Activated naive CD4-positive, alpha-beta T cell treated with anti-CD3 and anti-CD28 coated beads for 36 hours (primary cell): ENCODE measurements at regions of chr2 and their contacts with region 1.

Region 1: DNA sequence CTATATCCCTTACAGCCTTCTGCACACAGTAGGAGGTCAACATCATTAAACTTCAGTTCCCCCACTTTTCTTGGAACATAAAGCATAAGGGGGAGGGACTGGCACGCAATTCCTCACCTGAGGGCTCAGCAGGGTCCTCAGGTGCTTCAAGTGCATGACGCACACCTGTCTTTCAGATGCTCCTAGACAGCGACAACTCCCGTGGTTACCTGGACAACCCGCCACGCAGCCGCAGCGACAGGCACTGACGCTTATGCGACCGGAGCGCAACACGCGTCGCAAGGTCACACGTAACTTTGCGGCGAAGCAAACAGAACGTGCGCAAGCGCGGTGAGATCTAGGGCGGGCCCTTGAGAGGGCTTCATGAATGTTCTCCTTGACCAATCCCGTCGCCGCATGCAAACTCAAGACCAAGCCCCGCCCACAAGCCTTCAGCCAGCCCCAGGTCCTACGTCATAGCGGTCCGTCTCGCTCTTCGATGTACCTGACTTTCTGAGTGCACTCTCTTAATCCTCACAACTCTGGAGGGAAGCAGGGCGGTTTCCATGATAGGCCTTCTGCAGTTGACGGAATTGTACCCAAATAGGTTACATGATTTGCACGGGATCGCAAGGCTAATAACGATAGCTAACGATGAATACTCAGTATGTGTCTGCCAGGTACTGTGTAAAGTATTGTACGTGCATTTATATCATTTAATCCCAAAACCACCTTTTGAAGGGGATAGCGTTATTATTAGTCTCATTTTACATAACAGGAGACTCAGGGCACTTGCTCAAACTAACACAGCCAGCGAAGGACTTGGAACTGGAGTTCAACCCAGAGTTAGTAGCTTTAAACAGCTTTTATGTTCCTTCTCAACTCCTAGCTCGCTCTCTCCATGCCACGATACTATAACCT is at the start of gene IFT172:
- DNase-seq: peak; percentile 100
- H3K4me3 Mint-ChIP-seq: peak within 1 kb of the TSS; percentile 87
- H3K27ac Mint-ChIP-seq: peak within 1 kb of the TSS; percentile 66
- H3K4me1 Mint-ChIP-seq: peaks cover 20% of the 10 kb centered on the region
- H3K27me3 Mint-ChIP-seq: peaks cover 10% of the 10 kb centered on the region
- total RNA-seq, gene IFT172: 9.2 to 12.7 TPM

Region 2: DNA sequence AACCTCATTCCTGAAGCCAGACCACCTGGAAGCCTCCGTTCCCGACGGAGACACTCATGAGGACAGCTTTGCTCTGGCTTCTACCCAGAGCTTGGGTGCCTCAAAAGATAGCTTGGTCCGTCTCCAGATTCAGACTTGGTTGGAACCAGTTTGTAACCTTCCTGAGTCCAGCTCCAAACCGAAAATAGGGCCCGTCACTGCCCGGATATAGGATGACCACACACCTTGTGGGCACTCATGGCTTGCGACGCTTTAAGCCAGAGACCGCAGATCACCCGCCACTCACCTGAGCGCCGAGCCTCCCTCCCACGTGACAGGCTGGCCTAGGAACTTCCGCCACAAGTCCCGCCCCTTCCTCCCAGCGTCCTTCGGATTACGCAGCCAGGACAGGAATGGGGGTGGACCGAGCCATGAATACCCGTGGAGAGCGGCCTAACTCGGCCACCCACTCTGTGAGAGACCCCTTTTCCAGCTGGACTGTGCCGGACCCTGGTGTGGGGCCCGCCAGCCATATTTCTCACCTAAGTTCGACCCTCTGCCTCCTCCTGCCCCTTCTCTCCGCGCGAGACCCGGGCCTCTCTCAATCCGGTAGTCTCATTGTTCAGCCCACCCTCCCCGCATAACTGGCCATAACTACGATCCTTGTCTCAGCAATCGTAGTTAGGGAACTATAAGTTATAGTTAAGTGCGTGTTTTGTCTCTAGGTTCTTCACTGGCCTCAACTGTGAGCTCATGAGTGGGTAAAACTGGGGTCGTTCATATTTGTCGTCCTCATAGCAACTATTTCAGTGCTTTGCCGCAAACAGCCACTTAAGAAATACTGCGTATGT is 166.8 kb before region 1 on chr2 and contains the start of gene MPV17:
- CTCF ChIA-PET with region 1: no interaction called
- intact Hi-C with region 1: loop called (anchors 1 kb)
- DNase-seq: peak; percentile 95
- H3K4me3 Mint-ChIP-seq: peak within 1 kb of the TSS; percentile 84
- H3K27ac Mint-ChIP-seq: peak within 1 kb of the TSS; percentile 85
- H3K4me1 Mint-ChIP-seq: peaks cover 14% of the 10 kb centered on the region
- H3K27me3 Mint-ChIP-seq: no peaks in the 10 kb centered on the region
- total RNA-seq, gene MPV17: 80.2 to 82.3 TPM

Region 3: DNA sequence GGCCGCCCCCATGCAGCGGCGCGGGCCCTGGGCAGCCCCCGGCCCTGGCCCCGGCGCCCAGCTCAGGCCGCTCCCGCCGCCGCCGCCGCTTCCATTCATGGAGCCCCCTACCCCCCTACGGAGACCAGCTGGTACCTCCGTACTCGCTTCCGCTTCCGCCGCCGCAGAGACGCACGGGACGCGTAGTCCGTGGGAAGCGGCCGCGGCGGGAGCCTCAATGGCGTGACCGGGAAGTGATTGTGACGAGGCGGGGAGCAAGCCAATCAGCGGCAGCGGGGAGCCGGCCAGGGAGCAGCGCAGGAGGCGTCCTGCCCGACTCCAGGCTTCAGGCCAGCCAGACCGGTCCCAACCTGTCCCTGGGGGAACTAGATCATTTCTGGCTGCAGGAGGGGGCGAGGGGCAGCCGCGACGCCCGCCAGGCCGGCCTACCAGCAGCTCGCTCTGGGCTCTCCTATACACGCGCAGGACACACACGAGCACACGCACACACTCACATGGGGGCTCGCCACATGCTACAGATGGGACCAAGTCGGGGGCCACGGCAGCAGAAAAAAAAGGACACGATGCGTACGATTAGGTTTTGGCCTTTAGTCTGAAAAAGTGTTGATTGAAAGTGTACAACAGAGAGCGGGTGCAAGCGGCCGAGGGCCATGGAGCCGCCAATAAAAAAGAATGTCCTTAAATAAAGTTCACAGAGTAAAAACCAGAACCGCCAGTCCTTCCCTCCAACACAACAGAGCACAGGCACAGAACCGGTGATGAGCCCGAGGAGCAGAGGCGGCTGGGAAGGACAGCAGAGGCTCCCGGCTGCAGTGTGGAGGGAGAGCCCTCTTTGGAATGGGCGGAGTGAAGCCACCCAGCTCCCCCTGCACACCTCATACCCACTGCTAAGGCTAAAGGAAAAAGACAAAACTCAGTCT is 108.9 kb before region 1 on chr2 and contains the start of gene ZNF513:
- CTCF ChIA-PET with region 1: no interaction called
- intact Hi-C with region 1: loop called (anchors 1 kb)
- DNase-seq: peak; percentile 93
- H3K4me3 Mint-ChIP-seq: peak within 1 kb of the TSS; percentile 79
- H3K27ac Mint-ChIP-seq: peak within 1 kb of the TSS; percentile 86
- H3K4me1 Mint-ChIP-seq: peaks cover 30% of the 10 kb centered on the region
- H3K27me3 Mint-ChIP-seq: no peaks in the 10 kb centered on the region
- total RNA-seq, gene ZNF513: 4.9 to 5.2 TPM

Region 4: DNA sequence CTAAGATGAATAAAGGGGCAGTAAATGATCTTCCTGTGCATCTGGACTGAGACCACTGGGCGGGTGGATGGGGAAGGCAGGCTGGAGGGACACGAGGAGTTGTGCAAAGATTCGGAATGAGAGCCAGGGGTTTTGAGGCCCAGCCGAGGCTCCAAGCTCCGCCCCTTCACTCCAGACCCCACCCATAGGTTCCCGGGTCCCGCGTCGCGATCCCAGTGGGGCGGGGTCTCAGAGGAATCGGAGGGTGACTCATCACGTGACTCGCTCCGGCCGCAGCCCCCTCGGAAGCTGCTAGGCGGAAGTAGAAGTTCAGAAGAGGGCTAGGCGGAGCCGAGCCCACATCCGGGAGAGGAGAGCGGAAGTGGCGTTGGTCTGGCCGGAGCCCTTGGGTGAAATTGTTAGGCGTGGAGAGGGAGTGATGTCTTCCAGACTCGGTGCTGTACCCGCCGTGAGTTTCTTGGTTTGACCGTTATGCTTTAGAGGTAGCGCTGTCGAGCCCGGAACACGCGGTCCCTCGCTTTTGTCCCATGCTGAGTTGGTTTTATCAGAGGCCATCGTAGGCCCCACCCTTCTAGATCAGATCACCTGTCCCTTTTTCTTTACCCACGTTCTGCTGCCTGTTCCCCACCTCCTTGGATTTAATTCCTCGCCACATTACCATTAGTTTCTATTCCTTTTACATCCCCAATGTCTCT is 93.1 kb after region 1 on chr2 and contains the start of gene ZNF512:
- CTCF ChIA-PET with region 1: no interaction called
- intact Hi-C with region 1: loop called (anchors 1 kb)
- DNase-seq: peak; percentile 86
- H3K4me3 Mint-ChIP-seq: peak within 1 kb of the TSS; percentile 99
- H3K27ac Mint-ChIP-seq: peak within 1 kb of the TSS; percentile 90
- H3K4me1 Mint-ChIP-seq: peaks cover 46% of the 10 kb centered on the region
- H3K27me3 Mint-ChIP-seq: no peaks in the 10 kb centered on the region
- total RNA-seq, gene ZNF512: 34.7 to 35.8 TPM

Region 5: GRCh38 chr2:27638037-27638637 is 148.4 kb after region 1 on chr2:
- CTCF ChIA-PET with region 1: no interaction called
- intact Hi-C with region 1: loop called (anchors 1 kb)
- DNase-seq: peak; percentile 17
- H3K4me3 Mint-ChIP-seq: peak overlapping the region; percentile 28
- H3K27ac Mint-ChIP-seq: peak overlapping the region; percentile 92
- H3K4me1 Mint-ChIP-seq: peaks cover 20% of the 10 kb centered on the region
- H3K27me3 Mint-ChIP-seq: no peaks in the 10 kb centered on the region

Region 6: GRCh38 chr2:28219138-28219537 is 729.4 kb after region 1 on chr2:
- CTCF ChIA-PET with region 1: no interaction called
- intact Hi-C with region 1: no loop called
- DNase-seq: no peak
- H3K4me3 Mint-ChIP-seq: no peak overlapping the region
- H3K27ac Mint-ChIP-seq: no peak overlapping the region
- H3K4me1 Mint-ChIP-seq: peaks cover 5% of the 10 kb centered on the region
- H3K27me3 Mint-ChIP-seq: no peaks in the 10 kb centered on the region